Ovary (tissue), 10 donors: ENCODE measurements at regions of chr3 and their contacts with region 1.

Region 1: GRCh38 chr3:138915503-138916498 is 31.1 kb downstream of the FOXL2 start:
- DNase-seq: peak; percentile 94 to 98 (median 96)
- H3K4me3 ChIP-seq: peak overlapping the region; percentile 67
- H3K27ac ChIP-seq: peak overlapping the region; percentile 88 to 95
- H3K4me1 ChIP-seq: no peaks in the 10 kb centered on the region
- H3K27me3 ChIP-seq: no peaks in the 10 kb centered on the region
- CTCF ChIP-seq: peak; percentile 82 to 95 (median 94)
- EP300 ChIP-seq: no peak
- POLR2A ChIP-seq: no peak

Region 2: DNA sequence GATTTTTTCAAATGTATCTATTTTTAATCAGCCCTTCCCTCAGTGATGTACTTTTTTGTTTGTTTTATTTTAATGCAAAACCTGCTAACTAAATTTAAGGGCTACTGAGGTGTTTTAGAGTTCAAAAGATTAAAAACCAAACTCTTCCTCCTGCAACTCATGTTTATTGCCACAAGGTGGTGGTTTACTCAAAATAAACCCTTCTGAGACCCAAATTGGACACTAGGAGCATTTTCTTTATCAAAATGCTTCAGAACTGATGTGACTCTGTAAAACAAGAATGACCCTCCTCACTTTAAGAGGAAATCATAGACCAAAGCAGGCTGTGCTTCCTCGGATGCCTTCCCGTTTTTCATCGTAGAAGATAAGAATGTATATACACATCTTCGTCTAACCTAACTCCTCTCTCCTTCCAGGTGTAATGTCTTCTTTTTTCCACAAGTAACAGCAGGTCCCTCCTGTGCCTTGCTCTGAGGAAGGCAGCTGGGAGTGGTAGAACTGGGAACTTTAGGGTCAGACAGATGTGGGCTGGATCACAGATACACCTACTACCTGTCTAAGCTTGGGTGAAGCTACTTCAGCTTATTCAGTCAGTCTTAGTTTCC is 583.2 kb before region 1 on chr3:
- intact Hi-C with region 1: loop called in 1 of 4 experiments (anchors 10 kb)
- DNase-seq: no peak
- H3K4me3 ChIP-seq: no peak overlapping the region
- H3K27ac ChIP-seq: no peak overlapping the region
- H3K4me1 ChIP-seq: no peaks in the 10 kb centered on the region
- H3K27me3 ChIP-seq: no peaks in the 10 kb centered on the region
- CTCF ChIP-seq: peak; percentile 35 to 75 (median 74)
- EP300 ChIP-seq: no peak
- POLR2A ChIP-seq: no peak

Region 3: DNA sequence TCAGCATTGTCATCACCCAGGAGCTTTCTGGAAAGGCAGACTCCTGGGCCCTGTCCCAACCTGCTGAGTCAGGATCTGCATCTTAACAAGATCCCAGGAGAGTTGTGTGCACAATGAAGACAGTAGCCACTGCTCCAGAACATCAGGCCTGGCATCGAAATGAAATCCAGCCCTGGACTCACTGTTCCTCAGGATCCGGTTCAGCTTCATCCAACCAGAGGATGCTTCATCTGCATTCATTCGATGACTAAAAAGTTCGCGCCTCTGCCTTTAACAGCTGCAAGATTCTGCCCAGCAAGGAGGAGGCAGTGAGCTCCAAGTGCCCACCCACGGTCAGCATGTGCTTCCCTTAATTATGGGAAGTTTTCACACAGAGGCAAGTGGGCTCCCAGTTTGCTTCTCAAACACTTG is 507.0 kb before region 1 on chr3:
- intact Hi-C with region 1: loop called in 1 of 4 experiments (anchors 10 kb)
- DNase-seq: no peak
- H3K4me3 ChIP-seq: no peak overlapping the region
- H3K27ac ChIP-seq: no peak overlapping the region
- H3K4me1 ChIP-seq: no peaks in the 10 kb centered on the region
- H3K27me3 ChIP-seq: no peaks in the 10 kb centered on the region
- CTCF ChIP-seq: no peak
- EP300 ChIP-seq: no peak
- POLR2A ChIP-seq: no peak

Region 4: DNA sequence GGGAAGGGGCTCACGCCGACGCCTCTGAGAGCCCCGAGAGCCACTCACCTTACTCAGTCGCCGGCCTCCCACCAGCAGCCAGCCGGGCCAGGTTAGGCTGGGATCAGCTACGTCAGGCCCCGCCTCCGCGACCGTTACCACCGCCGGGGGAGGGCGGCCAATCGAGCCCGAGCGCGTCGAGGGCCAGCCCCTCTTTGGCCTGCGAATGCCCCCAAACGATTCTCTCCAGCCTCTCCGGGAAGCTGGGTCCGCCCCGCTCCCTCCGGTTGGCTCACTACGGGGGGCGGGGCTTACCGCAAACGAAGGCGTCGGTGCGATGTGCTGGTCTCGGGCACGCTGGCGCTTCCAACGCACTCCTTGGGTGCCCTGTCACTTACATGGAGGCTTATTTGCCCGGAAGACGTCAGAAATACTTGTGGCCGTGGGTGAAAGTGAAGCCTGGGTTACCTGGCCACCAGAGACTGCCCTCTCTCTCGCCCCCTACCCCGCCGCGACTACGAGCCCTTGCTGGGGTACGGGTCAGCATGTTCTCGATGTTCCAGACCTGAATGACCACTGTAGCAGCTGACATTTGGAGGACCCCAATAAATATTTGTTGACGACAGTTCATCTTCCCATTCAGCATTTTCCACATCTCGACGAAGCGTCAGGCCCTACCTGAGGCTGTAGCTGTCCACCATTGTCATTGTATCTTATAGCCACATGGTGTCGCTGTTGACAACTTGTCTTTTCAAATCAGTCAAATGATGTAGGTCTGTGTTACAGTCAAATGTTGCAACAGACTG is 321.5 kb before region 1 on chr3 and contains the start of gene CEP70:
- intact Hi-C with region 1: loop called (anchors 1 to 5 kb)
- DNase-seq: peak; percentile 96 to 97 (median 97)
- H3K4me3 ChIP-seq: peak within 1 kb of the TSS; percentile 66
- H3K27ac ChIP-seq: peak within 1 kb of the TSS; percentile 79 to 92
- H3K4me1 ChIP-seq: peaks cover 4% of the 10 kb centered on the region
- H3K27me3 ChIP-seq: no peaks in the 10 kb centered on the region
- CTCF ChIP-seq: peak; percentile 85 to 97 (median 93)
- EP300 ChIP-seq: peak; percentile 50
- POLR2A ChIP-seq: peak; percentile 96
- total RNA-seq, gene CEP70: 49.1 to 101 (median 68.1) TPM

Region 5: GRCh38 chr3:138608322-138609135 is 307.3 kb before region 1 on chr3 and contains the start of gene FAIM:
- intact Hi-C with region 1: loop called in 1 of 4 experiments (anchors 5 kb)
- DNase-seq: peak; percentile 63 to 85 (median 73)
- H3K4me3 ChIP-seq: peak within 1 kb of the TSS; percentile 83
- H3K27ac ChIP-seq: peak within 1 kb of the TSS; percentile 91 to 98
- H3K4me1 ChIP-seq: no peaks in the 10 kb centered on the region
- H3K27me3 ChIP-seq: no peaks in the 10 kb centered on the region
- CTCF ChIP-seq: no peak
- EP300 ChIP-seq: no peak
- POLR2A ChIP-seq: peak; percentile 22
- total RNA-seq, gene FAIM: 7.2 to 27.5 (median 9.2) TPM

Region 6: GRCh38 chr3:138694287-138695007 is 221.4 kb before region 1 on chr3:
- intact Hi-C with region 1: loop called in 3 of 4 experiments (anchors 5 to 10 kb)
- DNase-seq: peak in 1 of 5 donors; percentile 36
- H3K4me3 ChIP-seq: no peak overlapping the region
- H3K27ac ChIP-seq: no peak overlapping the region
- H3K4me1 ChIP-seq: peaks cover 6% of the 10 kb centered on the region
- H3K27me3 ChIP-seq: no peaks in the 10 kb centered on the region
- CTCF ChIP-seq: no peak
- EP300 ChIP-seq: no peak
- POLR2A ChIP-seq: no peak

Region 7: GRCh38 chr3:138834359-138835212 is 81.2 kb before region 1 on chr3 and contains the start of gene PIK3CB:
- intact Hi-C with region 1: loop called in 3 of 4 experiments (anchors 2 to 10 kb)
- DNase-seq: peak; percentile 87 to 93 (median 90)
- H3K4me3 ChIP-seq: peak within 1 kb of the TSS; percentile 65
- H3K27ac ChIP-seq: peak within 1 kb of the TSS; percentile 95
- H3K4me1 ChIP-seq: peaks cover 2% of the 10 kb centered on the region
- H3K27me3 ChIP-seq: no peaks in the 10 kb centered on the region
- CTCF ChIP-seq: peak in 2 of 3 donors; percentile 12 to 55
- EP300 ChIP-seq: no peak
- POLR2A ChIP-seq: no peak
- total RNA-seq, gene PIK3CB: 14.4 to 27.1 (median 21.0) TPM

Region 8: GRCh38 chr3:139088462-139089324 is 172.9 kb after region 1 on chr3:
- intact Hi-C with region 1: no loop called
- DNase-seq: no peak
- H3K4me3 ChIP-seq: no peak overlapping the region
- H3K27ac ChIP-seq: no peak overlapping the region
- H3K4me1 ChIP-seq: no peaks in the 10 kb centered on the region
- H3K27me3 ChIP-seq: no peaks in the 10 kb centered on the region
- CTCF ChIP-seq: no peak
- EP300 ChIP-seq: no peak
- POLR2A ChIP-seq: no peak